CD14-positive monocyte (primary cell): ENCODE measurements at regions of chr2 and their contacts with region 1.

Region 1: DNA sequence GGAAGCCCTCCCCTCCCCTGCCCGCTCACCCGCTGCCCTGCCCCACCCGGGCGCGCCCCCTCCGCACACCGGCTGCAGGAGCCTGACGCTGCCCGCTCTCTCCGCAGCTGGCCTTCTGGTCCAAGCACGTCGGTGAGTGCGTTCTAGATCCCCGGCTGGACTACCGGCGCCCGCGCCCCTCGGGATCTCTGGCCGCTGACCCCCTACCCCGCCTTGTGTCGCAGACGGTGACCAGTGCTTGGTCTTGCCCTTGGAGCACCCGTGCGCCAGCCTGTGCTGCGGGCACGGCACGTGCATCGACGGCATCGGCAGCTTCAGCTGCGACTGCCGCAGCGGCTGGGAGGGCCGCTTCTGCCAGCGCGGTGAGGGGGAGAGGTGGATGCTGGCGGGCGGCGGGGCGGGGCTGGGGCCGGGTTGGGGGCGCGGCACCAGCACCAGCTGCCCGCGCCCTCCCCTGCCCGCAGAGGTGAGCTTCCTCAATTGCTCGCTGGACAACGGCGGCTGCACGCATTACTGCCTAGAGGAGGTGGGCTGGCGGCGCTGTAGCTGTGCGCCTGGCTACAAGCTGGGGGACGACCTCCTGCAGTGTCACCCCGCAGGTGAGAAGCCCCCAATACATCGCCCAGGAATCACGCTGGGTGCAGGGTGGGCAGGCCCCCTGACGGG is 4.7 kb downstream of the PROC start:
- DNase-seq: peak; percentile 58 to 65 (median 64)
- H3K4me3 ChIP-seq: peak overlapping the region; percentile 4 to 59 (median 21)
- H3K4me3 Mint-ChIP-seq: peak overlapping the region; percentile 75 to 87
- H3K27ac ChIP-seq: no peak overlapping the region
- H3K27ac Mint-ChIP-seq: peak overlapping the region in 2 of 7 donors; percentile 30 to 73
- H3K4me1 ChIP-seq: peaks cover 17% of the 10 kb centered on the region in 2 donors
- H3K4me1 Mint-ChIP-seq: peaks cover 17% of the 10 kb centered on the region
- H3K27me3 ChIP-seq: peaks cover 7 to 29% of the 10 kb centered on the region in 2 donors
- H3K27me3 Mint-ChIP-seq: peaks cover 28 to 38% (median 37%) of the 10 kb centered on the region in 3 donors
- CTCF ChIP-seq: no peak

Region 2: DNA sequence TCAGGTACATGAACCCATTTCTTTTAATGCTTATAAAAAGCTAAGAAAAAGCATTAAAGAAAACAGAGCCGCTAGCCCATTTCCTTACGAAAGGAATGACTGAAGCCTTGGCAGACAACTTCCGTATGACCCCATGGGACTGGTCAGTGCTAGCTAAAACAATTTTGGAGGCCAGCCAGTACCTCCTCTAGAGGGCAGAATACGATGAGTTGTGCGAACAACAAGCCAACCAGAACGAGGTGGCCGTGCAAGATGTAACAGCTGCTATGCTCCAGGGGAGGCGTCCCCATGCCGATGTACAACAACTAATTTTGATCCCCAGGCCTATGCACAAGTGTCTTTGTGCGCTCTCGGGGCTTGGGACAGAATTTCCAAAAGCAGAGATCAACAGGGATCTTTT is 51.9 kb before region 1 on chr2:
- intact Hi-C with region 1: loop called in 1 of 2 experiments (anchors 10 kb)
- DNase-seq: no peak
- H3K4me3 ChIP-seq: no peak overlapping the region
- H3K4me3 Mint-ChIP-seq: no peak overlapping the region
- H3K27ac ChIP-seq: no peak overlapping the region
- H3K27ac Mint-ChIP-seq: peak overlapping the region in 2 of 7 donors; percentile 28
- H3K4me1 ChIP-seq: no peaks in the 10 kb centered on the region
- H3K4me1 Mint-ChIP-seq: peaks cover 18% of the 10 kb centered on the region
- H3K27me3 ChIP-seq: no peaks in the 10 kb centered on the region
- H3K27me3 Mint-ChIP-seq: no peaks in the 10 kb centered on the region
- CTCF ChIP-seq: no peak

Region 3: DNA sequence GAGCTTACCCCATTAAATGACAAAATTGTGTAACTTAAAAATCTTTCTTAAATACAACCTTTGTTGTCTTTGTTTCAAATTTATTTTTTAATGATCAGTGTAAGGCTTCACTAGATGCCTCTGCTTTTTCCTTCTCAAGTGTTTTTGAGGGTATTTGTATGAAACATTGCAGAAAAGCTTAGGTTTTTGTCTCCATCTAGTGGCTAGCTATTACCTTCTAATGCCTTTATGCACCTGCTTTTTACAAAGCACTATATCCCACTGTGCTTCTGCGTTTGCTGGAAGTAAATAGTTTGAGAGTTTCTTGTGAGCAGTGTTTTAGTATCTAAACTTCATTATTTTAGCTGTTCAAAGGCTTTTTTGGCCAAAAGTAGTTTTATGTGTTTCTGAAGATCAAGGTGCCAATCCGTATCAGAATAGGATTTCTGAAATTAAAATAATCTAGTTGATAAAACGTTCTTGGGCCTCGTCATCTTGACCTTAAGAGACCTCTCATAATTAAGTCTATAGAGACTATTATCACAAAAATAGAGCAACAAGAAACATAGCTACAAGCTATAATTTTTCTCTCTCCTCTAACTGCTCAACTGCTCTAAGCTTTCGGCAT is 56.4 kb after region 1 on chr2:
- intact Hi-C with region 1: loop called in 1 of 2 experiments (anchors 5 kb)
- DNase-seq: peak; percentile 9 to 60 (median 33)
- H3K4me3 ChIP-seq: no peak overlapping the region
- H3K4me3 Mint-ChIP-seq: no peak overlapping the region
- H3K27ac ChIP-seq: no peak overlapping the region
- H3K27ac Mint-ChIP-seq: no peak overlapping the region
- H3K4me1 ChIP-seq: no peaks in the 10 kb centered on the region
- H3K4me1 Mint-ChIP-seq: no peaks in the 10 kb centered on the region
- H3K27me3 ChIP-seq: no peaks in the 10 kb centered on the region
- H3K27me3 Mint-ChIP-seq: no peaks in the 10 kb centered on the region
- CTCF ChIP-seq: peak; percentile 77